ENCODE measurements at regions of chr1 and their contacts with region 1.

Region 1: GRCh38 chr1:19799877-19800804 is at the start of gene TMCO4:
- DNase-seq: no peak
- ATAC-seq: peak; percentile 81
- H3K4me3 ChIP-seq: peak within 1 kb of the TSS; percentile 54 to 78
- H3K27ac ChIP-seq: peak within 1 kb of the TSS; percentile 79
- H3K4me1 ChIP-seq: peaks cover 5% of the 10 kb centered on the region
- H3K27me3 ChIP-seq: no peaks in the 10 kb centered on the region
- CTCF ChIP-seq: no peak
- total RNA-seq, gene TMCO4: 13.2 TPM

Region 2: DNA sequence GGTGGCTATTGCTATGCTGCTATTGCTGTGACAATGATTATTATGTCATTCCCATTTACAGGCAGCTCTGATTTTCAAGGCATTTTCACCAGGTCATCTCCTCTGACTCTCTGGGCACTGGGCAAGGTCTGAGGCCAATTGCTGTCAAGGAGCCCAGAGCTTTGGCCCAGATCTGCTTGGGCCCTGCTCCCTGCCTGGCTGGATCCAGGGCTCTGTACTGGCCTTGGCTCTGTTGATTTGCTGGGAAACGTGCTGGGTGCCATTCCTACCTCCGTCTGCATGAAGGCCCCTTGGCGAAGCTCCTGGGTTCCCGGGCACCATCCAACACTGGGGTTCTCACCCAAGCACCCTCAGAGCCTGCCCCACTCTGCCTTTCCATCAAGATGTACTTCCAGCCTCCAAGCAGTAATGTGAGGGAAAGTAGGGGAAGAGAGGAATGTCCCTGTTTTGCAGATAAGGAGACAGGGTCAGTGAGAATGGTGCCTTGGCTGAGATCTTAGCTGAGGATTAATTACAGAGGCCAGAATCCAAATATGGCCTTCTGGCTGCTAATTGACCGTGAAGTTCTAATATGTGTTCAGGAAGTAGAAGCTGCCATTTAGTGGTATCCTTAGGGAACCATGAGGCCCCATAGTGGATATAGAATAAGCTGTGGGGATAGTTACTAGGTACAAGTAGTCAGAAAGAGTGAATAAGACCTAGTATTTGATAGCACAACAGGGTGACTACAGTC is 71.6 kb before region 1 on chr1:
- CTCF ChIA-PET with region 1: no interaction called
- POLR2A ChIA-PET with region 1: interaction called, 13 read pairs
- in situ Hi-C with region 1: no loop called
- intact Hi-C with region 1: no loop called
- DNase-seq: no peak
- ATAC-seq: no peak
- H3K4me3 ChIP-seq: no peak overlapping the region
- H3K27ac ChIP-seq: no peak overlapping the region
- H3K4me1 ChIP-seq: no peaks in the 10 kb centered on the region
- H3K27me3 ChIP-seq: no peaks in the 10 kb centered on the region
- CTCF ChIP-seq: no peak

Measured in Panc1 (cell line).